Left cardiac atrium (tissue), 4 donors: ENCODE measurements at regions of chr20 and their contacts with region 1.

Region 1: GRCh38 chr20:11780765-11781369 is 136.8 kb upstream of the BTBD3 start:
- DNase-seq: no peak
- ATAC-seq: no peak

Region 2: GRCh38 chr20:11599592-11599991 is 181.3 kb before region 1 on chr20:
- intact Hi-C with region 1: no loop called
- DNase-seq: no peak
- ATAC-seq: no peak

Region 3: DNA sequence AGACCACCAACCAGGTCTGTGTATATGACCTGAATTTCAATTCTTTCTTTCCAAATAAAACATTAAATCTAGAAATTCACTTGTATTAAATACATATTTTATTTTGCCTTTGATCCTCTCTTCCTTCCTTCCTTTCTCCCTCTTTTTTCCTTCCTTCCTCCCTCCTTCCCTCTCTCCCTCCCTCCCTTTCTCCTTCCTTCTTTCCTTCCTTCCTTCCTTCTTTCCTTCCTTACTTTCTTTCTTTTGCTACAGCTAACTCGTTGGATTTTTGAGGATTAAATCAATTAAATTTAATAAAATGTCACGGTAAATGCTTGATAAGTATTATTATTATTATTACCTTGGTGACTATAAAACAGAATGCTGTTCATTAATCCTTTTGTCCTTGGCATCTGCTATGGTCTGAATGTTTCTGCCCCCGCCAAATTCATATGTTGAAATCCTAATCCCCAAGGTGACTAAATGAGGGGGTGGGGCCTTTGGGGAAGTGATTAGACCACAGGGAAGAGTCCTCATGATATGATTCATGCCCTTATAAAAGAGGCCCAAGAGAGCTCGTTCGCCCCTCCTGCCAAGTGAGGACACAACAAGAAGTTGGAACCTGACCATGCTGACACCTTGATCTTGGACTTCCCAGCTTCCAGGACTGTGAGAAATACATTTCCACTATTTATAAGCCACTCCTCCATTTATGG is 69.3 kb after region 1 on chr20:
- intact Hi-C with region 1: loop called in 1 of 2 experiments (anchors 10 kb)
- DNase-seq: no peak
- ATAC-seq: no peak